AG04450 (cell line): ENCODE measurements at regions of chr2 and their contacts with region 1.

Region 1: GRCh38 chr2:59025157-59025757 is 784.1 kb upstream of the FANCL start:
- DNase-seq: no peak
- H3K4me3 ChIP-seq: no peak overlapping the region
- H3K27ac ChIP-seq: no peak overlapping the region
- H3K27me3 ChIP-seq: no peaks in the 10 kb centered on the region
- CTCF ChIP-seq: peak; percentile 88

Region 2: DNA sequence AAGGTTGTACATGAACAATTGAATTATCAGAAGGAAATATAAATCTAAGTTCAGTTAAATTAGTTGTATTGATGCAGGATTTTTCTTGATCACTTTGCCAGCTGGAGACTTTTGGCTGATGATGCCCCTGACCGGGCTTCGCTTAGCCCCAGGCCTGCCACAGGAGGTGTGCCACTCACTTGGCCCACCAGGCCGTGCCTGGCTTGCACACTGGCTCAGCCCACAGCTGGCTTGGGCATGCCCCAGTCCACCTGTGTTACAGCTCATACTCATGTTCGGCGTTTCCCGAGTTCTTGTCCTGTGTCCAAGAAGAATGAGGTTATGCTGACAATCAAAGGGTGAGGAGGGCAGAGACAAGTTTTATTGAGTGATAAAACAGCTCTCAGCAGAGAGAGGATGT is 10.2 kb before region 1 on chr2:
- CTCF ChIA-PET with region 1: interaction called, 11 read pairs
- POLR2A ChIA-PET with region 1: no interaction called
- DNase-seq: no peak
- H3K4me3 ChIP-seq: no peak overlapping the region
- H3K27ac ChIP-seq: no peak overlapping the region
- H3K27me3 ChIP-seq: no peaks in the 10 kb centered on the region
- CTCF ChIP-seq: no peak

Region 3: GRCh38 chr2:60560734-60561644 is 1535.7 kb after region 1 on chr2:
- CTCF ChIA-PET with region 1: interaction called, 14 read pairs
- POLR2A ChIA-PET with region 1: no interaction called
- DNase-seq: no peak
- H3K4me3 ChIP-seq: no peak overlapping the region
- H3K27ac ChIP-seq: no peak overlapping the region
- H3K27me3 ChIP-seq: peaks cover 32% of the 10 kb centered on the region
- CTCF ChIP-seq: peak; percentile 64